Tibial artery (tissue), 4 donors: ENCODE measurements at regions of chr5 and their contacts with region 1.

Region 1: DNA sequence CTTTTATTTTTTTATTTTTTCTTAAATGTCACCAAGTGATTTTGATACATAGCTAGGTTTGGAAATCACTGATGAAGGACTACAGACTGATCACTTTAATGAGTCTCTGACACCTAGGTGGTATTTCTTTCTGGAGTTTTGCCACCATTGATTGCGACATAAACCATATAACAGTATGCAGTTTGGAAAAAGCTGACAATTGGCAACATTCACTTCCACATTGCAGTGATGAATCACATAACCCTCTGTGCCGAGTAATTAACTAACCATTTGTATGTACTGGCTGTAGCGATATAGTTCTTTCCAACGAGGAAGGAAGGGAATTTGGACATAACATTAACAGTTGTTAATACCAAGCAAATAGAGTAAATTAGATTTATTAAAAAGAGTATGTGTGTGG is 222.9 kb upstream of the EFNA5 start:
- DNase-seq: no peak
- H3K4me3 ChIP-seq: no peak overlapping the region
- H3K27ac ChIP-seq: peak overlapping the region in 1 of 2 donors; percentile 26
- H3K4me1 ChIP-seq: peaks cover 0 to 20% (median 8%) of the 10 kb centered on the region in 4 donors
- H3K27me3 ChIP-seq: no peaks in the 10 kb centered on the region
- CTCF ChIP-seq: no peak

Region 2: DNA sequence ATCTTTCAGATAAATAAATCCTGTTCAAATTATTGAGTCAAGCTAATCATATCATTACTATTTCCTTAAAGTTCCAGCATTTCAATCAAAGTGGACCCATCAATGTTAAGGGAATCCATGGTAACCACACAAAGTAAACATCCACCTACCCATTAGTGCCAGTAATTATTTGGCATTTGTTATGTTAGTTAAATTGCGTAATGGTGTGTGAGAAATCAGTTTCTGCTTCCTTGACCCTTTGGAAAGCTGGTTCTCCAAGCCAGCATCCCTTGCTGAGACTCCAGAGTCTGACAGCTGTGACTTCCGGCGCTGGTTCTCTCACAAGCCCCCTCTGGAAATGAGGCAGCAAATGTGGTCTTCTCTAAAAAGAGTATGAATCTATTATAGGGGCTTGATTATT is 85.6 kb after region 1 on chr5:
- intact Hi-C with region 1: loop called (anchors 5 kb)
- DNase-seq: no peak
- H3K4me3 ChIP-seq: no peak overlapping the region
- H3K27ac ChIP-seq: no peak overlapping the region
- H3K4me1 ChIP-seq: no peaks in the 10 kb centered on the region
- H3K27me3 ChIP-seq: no peaks in the 10 kb centered on the region
- CTCF ChIP-seq: no peak